H1 (cell line): ENCODE measurements at regions of chr16 and their contacts with region 1.

Region 1: GRCh38 chr16:11386791-11387546 is 41.7 kb downstream of the RMI2 start:
- DNase-seq: peak; percentile 41 to 92
- H3K4me3 ChIP-seq: no peak overlapping the region
- H3K27ac ChIP-seq: no peak overlapping the region
- H3K4me1 ChIP-seq: peaks cover 0 to 29% (median 14%) of the 10 kb centered on the region in 4 experiments; a peak in 5 of 7 replicates
- H3K27me3 ChIP-seq: no peaks in the 10 kb centered on the region
- CTCF ChIP-seq: peak; percentile 86 to 88 (median 86)
- EP300 ChIP-seq: no peak
- POLR2A ChIP-seq: no peak
- RAD21 ChIP-seq: peak; percentile 64 to 76

Region 2: GRCh38 chr16:11345040-11345862 is 41.7 kb before region 1 on chr16 and contains the start of gene RMI2:
- CTCF ChIA-PET with region 1: interaction called, 11 read pairs
- POLR2A ChIA-PET with region 1: no interaction called
- DNase-seq: peak; percentile 84 to 93
- H3K4me3 ChIP-seq: peak within 1 kb of the TSS; percentile 50 to 94 (median 69)
- H3K27ac ChIP-seq: peak within 1 kb of the TSS; percentile 84; the same call in 1 of the 2 replicates
- H3K4me1 ChIP-seq: peaks cover 6 to 24% (median 14%) of the 10 kb centered on the region in 4 experiments
- H3K27me3 ChIP-seq: no peaks in the 10 kb centered on the region
- CTCF ChIP-seq: no peak
- EP300 ChIP-seq: no peak
- POLR2A ChIP-seq: peak; percentile 79 to 81
- RAD21 ChIP-seq: no peak
- total RNA-seq, gene RMI2: 96.0 and 96.9 TPM in 2 replicates

Region 3: GRCh38 chr16:11481987-11482386 is 95.0 kb after region 1 on chr16:
- CTCF ChIA-PET with region 1: no interaction called
- POLR2A ChIA-PET with region 1: no interaction called
- DNase-seq: no peak
- H3K4me3 ChIP-seq: no peak overlapping the region
- H3K27ac ChIP-seq: no peak overlapping the region
- H3K4me1 ChIP-seq: no peaks in the 10 kb centered on the region
- H3K27me3 ChIP-seq: no peaks in the 10 kb centered on the region
- CTCF ChIP-seq: no peak
- EP300 ChIP-seq: no peak
- POLR2A ChIP-seq: no peak
- RAD21 ChIP-seq: no peak